ENCODE measurements at regions of chr6 and their contacts with region 1.

Region 1: GRCh38 chr6:159134701-159135364 is 34.4 kb upstream of the FNDC1 start:
- DNase-seq: peak; percentile 63 to 86 (median 78)
- ATAC-seq: peak; percentile 96
- H3K4me3 ChIP-seq: no peak overlapping the region
- H3K4me3 Mint-ChIP-seq: no peak overlapping the region
- H3K27ac ChIP-seq: no peak overlapping the region
- H3K27ac Mint-ChIP-seq: no peak overlapping the region
- H3K4me1 ChIP-seq: no peaks in the 10 kb centered on the region
- H3K4me1 Mint-ChIP-seq: no peaks in the 10 kb centered on the region
- H3K27me3 ChIP-seq: no peaks in the 10 kb centered on the region
- H3K27me3 Mint-ChIP-seq: no peaks in the 10 kb centered on the region
- CTCF ChIP-seq: peak; percentile 96

Region 2: GRCh38 chr6:158704181-158704822 is 430.5 kb before region 1 on chr6:
- CTCF ChIA-PET with region 1: interaction called, 10 read pairs
- POLR2A ChIA-PET with region 1: no interaction called
- intact Hi-C with region 1: loop called (anchors 2 to 10 kb)
- DNase-seq: peak; percentile 66 to 89 (median 77)
- ATAC-seq: peak; percentile 97
- H3K4me3 ChIP-seq: peak overlapping the region; percentile 45 to 60
- H3K4me3 Mint-ChIP-seq: peak overlapping the region; percentile 81
- H3K27ac ChIP-seq: peak overlapping the region in 1 of 2 experiments; percentile 17
- H3K27ac Mint-ChIP-seq: peak overlapping the region; percentile 79
- H3K4me1 ChIP-seq: peaks cover 8% of the 10 kb centered on the region
- H3K4me1 Mint-ChIP-seq: peaks cover 9% of the 10 kb centered on the region
- H3K27me3 ChIP-seq: no peaks in the 10 kb centered on the region
- H3K27me3 Mint-ChIP-seq: no peaks in the 10 kb centered on the region
- CTCF ChIP-seq: peak; percentile 98

Region 3: GRCh38 chr6:158793432-158793831 is 341.4 kb before region 1 on chr6:
- CTCF ChIA-PET with region 1: interaction called, 3 read pairs
- POLR2A ChIA-PET with region 1: no interaction called
- intact Hi-C with region 1: loop called in 1 of 2 experiments (anchors 5 kb)
- DNase-seq: peak in 2 of 9 experiments; percentile 59 to 70
- ATAC-seq: peak; percentile 22
- H3K4me3 ChIP-seq: no peak overlapping the region
- H3K4me3 Mint-ChIP-seq: peak overlapping the region; percentile 32
- H3K27ac ChIP-seq: peak overlapping the region in 1 of 2 experiments; percentile 32
- H3K27ac Mint-ChIP-seq: peak overlapping the region; percentile 45
- H3K4me1 ChIP-seq: peaks cover 73% of the 10 kb centered on the region
- H3K4me1 Mint-ChIP-seq: peaks cover 81% of the 10 kb centered on the region
- H3K27me3 ChIP-seq: no peaks in the 10 kb centered on the region
- H3K27me3 Mint-ChIP-seq: no peaks in the 10 kb centered on the region
- CTCF ChIP-seq: peak; percentile 36

Region 4: GRCh38 chr6:159008656-159009288 is 126.1 kb before region 1 on chr6:
- CTCF ChIA-PET with region 1: interaction called, 497 read pairs
- POLR2A ChIA-PET with region 1: interaction called, 8 read pairs
- intact Hi-C with region 1: loop called (anchors 1 kb)
- DNase-seq: peak in 3 of 9 experiments; percentile 58 to 78 (median 68)
- ATAC-seq: peak; percentile 78
- H3K4me3 ChIP-seq: peak overlapping the region in 1 of 2 experiments; percentile 32
- H3K4me3 Mint-ChIP-seq: peak overlapping the region; percentile 67
- H3K27ac ChIP-seq: peak overlapping the region in 1 of 2 experiments; percentile 24
- H3K27ac Mint-ChIP-seq: peak overlapping the region; percentile 12
- H3K4me1 ChIP-seq: peaks cover 6% of the 10 kb centered on the region
- H3K4me1 Mint-ChIP-seq: peaks cover 36% of the 10 kb centered on the region
- H3K27me3 ChIP-seq: no peaks in the 10 kb centered on the region
- H3K27me3 Mint-ChIP-seq: no peaks in the 10 kb centered on the region
- CTCF ChIP-seq: peak; percentile 73

Region 5: GRCh38 chr6:159116343-159116742 is 18.5 kb before region 1 on chr6:
- CTCF ChIA-PET with region 1: interaction called, 133 read pairs
- POLR2A ChIA-PET with region 1: no interaction called
- intact Hi-C with region 1: no loop called
- DNase-seq: no peak
- ATAC-seq: no peak
- H3K4me3 ChIP-seq: no peak overlapping the region
- H3K4me3 Mint-ChIP-seq: no peak overlapping the region
- H3K27ac ChIP-seq: no peak overlapping the region
- H3K27ac Mint-ChIP-seq: no peak overlapping the region
- H3K4me1 ChIP-seq: no peaks in the 10 kb centered on the region
- H3K4me1 Mint-ChIP-seq: peaks cover 6% of the 10 kb centered on the region
- H3K27me3 ChIP-seq: no peaks in the 10 kb centered on the region
- H3K27me3 Mint-ChIP-seq: no peaks in the 10 kb centered on the region
- CTCF ChIP-seq: no peak

Region 6: GRCh38 chr6:159979136-159979874 is 844.5 kb after region 1 on chr6:
- CTCF ChIA-PET with region 1: no interaction called
- POLR2A ChIA-PET with region 1: no interaction called
- intact Hi-C with region 1: no loop called
- DNase-seq: peak in 7 of 9 experiments; percentile 49 to 85 (median 62)
- ATAC-seq: peak; percentile 79
- H3K4me3 ChIP-seq: peak overlapping the region in 1 of 2 experiments; percentile 16
- H3K4me3 Mint-ChIP-seq: peak overlapping the region; percentile 70
- H3K27ac ChIP-seq: peak overlapping the region; percentile 29 to 87
- H3K27ac Mint-ChIP-seq: peak overlapping the region; percentile 85
- H3K4me1 ChIP-seq: peaks cover 83% of the 10 kb centered on the region
- H3K4me1 Mint-ChIP-seq: peaks cover 95% of the 10 kb centered on the region
- H3K27me3 ChIP-seq: no peaks in the 10 kb centered on the region
- H3K27me3 Mint-ChIP-seq: no peaks in the 10 kb centered on the region
- CTCF ChIP-seq: no peak

Measured in CD8-positive, alpha-beta T cell (primary cell).